CD8-positive, alpha-beta T cell (primary cell): ENCODE measurements at regions of chr11 and their contacts with region 1.

Region 1: GRCh38 chr11:75280227-75280701 is 39.7 kb downstream of the TPBGL start:
- DNase-seq: peak; percentile 60 to 89 (median 79)
- ATAC-seq: peak; percentile 67
- H3K4me3 ChIP-seq: no peak overlapping the region
- H3K4me3 Mint-ChIP-seq: no peak overlapping the region
- H3K27ac ChIP-seq: no peak overlapping the region
- H3K27ac Mint-ChIP-seq: peak overlapping the region; percentile 90
- H3K4me1 ChIP-seq: peaks cover 48% of the 10 kb centered on the region
- H3K4me1 Mint-ChIP-seq: peaks cover 46% of the 10 kb centered on the region
- H3K27me3 ChIP-seq: no peaks in the 10 kb centered on the region
- H3K27me3 Mint-ChIP-seq: no peaks in the 10 kb centered on the region
- CTCF ChIP-seq: peak; percentile 96

Region 2: GRCh38 chr11:75208446-75208845 is 71.8 kb before region 1 on chr11:
- CTCF ChIA-PET with region 1: no interaction called
- POLR2A ChIA-PET with region 1: no interaction called
- intact Hi-C with region 1: no loop called
- DNase-seq: no peak
- ATAC-seq: no peak
- H3K4me3 ChIP-seq: no peak overlapping the region
- H3K4me3 Mint-ChIP-seq: no peak overlapping the region
- H3K27ac ChIP-seq: no peak overlapping the region
- H3K27ac Mint-ChIP-seq: no peak overlapping the region
- H3K4me1 ChIP-seq: no peaks in the 10 kb centered on the region
- H3K4me1 Mint-ChIP-seq: no peaks in the 10 kb centered on the region
- H3K27me3 ChIP-seq: peaks cover 0 to 2% of the 10 kb centered on the region in 2 experiments
- H3K27me3 Mint-ChIP-seq: peaks cover 12% of the 10 kb centered on the region
- CTCF ChIP-seq: no peak

Region 3: DNA sequence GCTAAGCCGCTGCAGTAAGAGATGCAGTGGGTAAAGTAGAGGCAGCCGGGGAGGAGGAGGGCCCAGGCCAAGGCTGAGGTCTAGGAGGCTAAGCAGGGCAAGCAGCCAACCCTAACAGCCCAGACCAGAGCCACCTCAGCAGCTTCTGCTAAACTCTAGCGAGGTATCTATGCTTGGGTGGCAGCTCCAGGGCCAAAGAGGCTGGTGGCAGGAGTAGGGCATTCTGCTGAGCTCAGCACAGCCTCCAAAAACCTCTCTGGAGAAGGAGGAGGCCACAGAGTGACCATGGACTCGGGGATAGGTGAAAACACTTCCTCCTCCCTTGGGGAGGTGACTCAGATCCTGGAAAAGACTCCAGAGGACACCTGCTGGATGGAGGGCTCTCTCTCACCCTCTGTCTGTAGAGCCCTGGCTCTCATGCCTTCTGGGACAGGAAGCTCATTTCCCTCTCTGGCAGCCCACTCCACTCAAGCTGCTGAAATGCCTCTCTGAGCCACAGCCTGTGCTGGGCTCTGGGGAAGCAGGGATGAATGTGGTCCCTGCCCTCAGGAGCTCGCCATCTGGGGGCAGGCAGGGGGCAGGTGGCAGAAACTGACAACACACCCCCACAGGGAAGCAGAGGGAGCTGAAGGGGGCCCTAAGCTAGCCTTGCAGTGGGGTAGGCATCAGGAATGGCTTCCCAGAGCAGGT is 56.2 kb before region 1 on chr11:
- CTCF ChIA-PET with region 1: no interaction called
- POLR2A ChIA-PET with region 1: no interaction called
- intact Hi-C with region 1: no loop called
- DNase-seq: no peak
- ATAC-seq: no peak
- H3K4me3 ChIP-seq: no peak overlapping the region
- H3K4me3 Mint-ChIP-seq: no peak overlapping the region
- H3K27ac ChIP-seq: no peak overlapping the region
- H3K27ac Mint-ChIP-seq: no peak overlapping the region
- H3K4me1 ChIP-seq: no peaks in the 10 kb centered on the region
- H3K4me1 Mint-ChIP-seq: no peaks in the 10 kb centered on the region
- H3K27me3 ChIP-seq: no peaks in the 10 kb centered on the region
- H3K27me3 Mint-ChIP-seq: peaks cover 3% of the 10 kb centered on the region
- CTCF ChIP-seq: no peak

Region 4: GRCh38 chr11:75248690-75249268 is 31.5 kb before region 1 on chr11:
- CTCF ChIA-PET with region 1: interaction called, 191 read pairs
- POLR2A ChIA-PET with region 1: no interaction called
- intact Hi-C with region 1: no loop called
- DNase-seq: peak; percentile 77 to 91 (median 87)
- ATAC-seq: peak; percentile 100
- H3K4me3 ChIP-seq: no peak overlapping the region
- H3K4me3 Mint-ChIP-seq: no peak overlapping the region
- H3K27ac ChIP-seq: no peak overlapping the region
- H3K27ac Mint-ChIP-seq: no peak overlapping the region
- H3K4me1 ChIP-seq: no peaks in the 10 kb centered on the region
- H3K4me1 Mint-ChIP-seq: no peaks in the 10 kb centered on the region
- H3K27me3 ChIP-seq: no peaks in the 10 kb centered on the region
- H3K27me3 Mint-ChIP-seq: peaks cover 2% of the 10 kb centered on the region
- CTCF ChIP-seq: peak; percentile 100

Region 5: DNA sequence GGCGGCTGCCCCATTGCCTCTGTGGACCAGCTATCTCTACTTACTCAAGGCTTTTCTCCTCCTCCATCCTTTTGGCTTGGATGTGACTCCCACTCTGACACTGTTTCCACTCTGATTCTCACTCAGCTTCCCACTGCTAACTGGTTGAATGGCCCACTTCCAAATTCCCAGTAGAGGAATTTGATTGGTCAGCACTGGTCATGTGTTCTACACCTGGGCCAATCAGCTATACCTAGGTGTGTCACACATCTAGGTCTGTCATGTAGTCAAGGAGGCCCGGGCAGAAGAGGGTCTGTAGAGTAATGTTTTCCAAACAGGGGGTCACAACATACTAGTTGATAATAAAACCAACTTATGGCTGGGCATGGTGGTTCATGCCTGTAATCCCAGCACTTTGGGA is 13.6 kb after region 1 on chr11:
- CTCF ChIA-PET with region 1: interaction called, 23 read pairs
- POLR2A ChIA-PET with region 1: interaction called, 3 read pairs
- intact Hi-C with region 1: no loop called
- DNase-seq: no peak
- ATAC-seq: no peak
- H3K4me3 ChIP-seq: no peak overlapping the region
- H3K4me3 Mint-ChIP-seq: no peak overlapping the region
- H3K27ac ChIP-seq: no peak overlapping the region
- H3K27ac Mint-ChIP-seq: no peak overlapping the region
- H3K4me1 ChIP-seq: peaks cover 13% of the 10 kb centered on the region
- H3K4me1 Mint-ChIP-seq: peaks cover 27% of the 10 kb centered on the region
- H3K27me3 ChIP-seq: no peaks in the 10 kb centered on the region
- H3K27me3 Mint-ChIP-seq: no peaks in the 10 kb centered on the region
- CTCF ChIP-seq: no peak

Region 6: DNA sequence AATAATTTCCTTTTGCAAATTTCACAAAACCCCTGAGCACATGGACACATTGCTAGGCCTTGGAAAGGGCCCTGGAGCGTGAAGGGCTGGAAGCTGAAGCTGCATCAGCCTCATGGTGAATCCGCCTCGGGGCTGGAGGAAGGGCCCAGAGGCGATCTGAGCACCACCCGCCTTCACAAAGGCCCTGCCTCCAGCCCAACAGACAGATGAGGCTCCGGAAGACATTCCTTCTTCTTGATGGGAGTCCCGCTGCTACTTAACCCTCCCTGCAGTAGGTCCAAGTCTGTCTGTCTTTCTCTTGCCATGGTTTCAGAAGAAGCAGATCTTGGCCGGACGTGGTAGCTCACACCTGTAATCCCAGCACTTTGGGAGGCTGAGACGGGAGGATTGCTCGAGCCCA is 54.7 kb after region 1 on chr11:
- CTCF ChIA-PET with region 1: interaction called, 20 read pairs
- POLR2A ChIA-PET with region 1: interaction called, 6 read pairs
- intact Hi-C with region 1: no loop called
- DNase-seq: no peak
- ATAC-seq: no peak
- H3K4me3 ChIP-seq: no peak overlapping the region
- H3K4me3 Mint-ChIP-seq: no peak overlapping the region
- H3K27ac ChIP-seq: no peak overlapping the region
- H3K27ac Mint-ChIP-seq: no peak overlapping the region
- H3K4me1 ChIP-seq: peaks cover 76% of the 10 kb centered on the region
- H3K4me1 Mint-ChIP-seq: peaks cover 86% of the 10 kb centered on the region
- H3K27me3 ChIP-seq: no peaks in the 10 kb centered on the region
- H3K27me3 Mint-ChIP-seq: no peaks in the 10 kb centered on the region
- CTCF ChIP-seq: no peak

Region 7: GRCh38 chr11:75351791-75352587 is 71.7 kb after region 1 on chr11:
- CTCF ChIA-PET with region 1: interaction called, 23 read pairs
- POLR2A ChIA-PET with region 1: interaction called, 18 read pairs
- intact Hi-C with region 1: loop called in 1 of 2 experiments (anchors 5 kb)
- DNase-seq: peak; percentile 30 to 83 (median 59)
- ATAC-seq: peak; percentile 67
- H3K4me3 ChIP-seq: peak overlapping the region; percentile 68 to 95
- H3K4me3 Mint-ChIP-seq: peak overlapping the region; percentile 93
- H3K27ac ChIP-seq: peak overlapping the region; percentile 63 to 74
- H3K27ac Mint-ChIP-seq: peak overlapping the region; percentile 89
- H3K4me1 ChIP-seq: peaks cover 60% of the 10 kb centered on the region
- H3K4me1 Mint-ChIP-seq: peaks cover 64% of the 10 kb centered on the region
- H3K27me3 ChIP-seq: no peaks in the 10 kb centered on the region
- H3K27me3 Mint-ChIP-seq: no peaks in the 10 kb centered on the region
- CTCF ChIP-seq: no peak

Region 8: DNA sequence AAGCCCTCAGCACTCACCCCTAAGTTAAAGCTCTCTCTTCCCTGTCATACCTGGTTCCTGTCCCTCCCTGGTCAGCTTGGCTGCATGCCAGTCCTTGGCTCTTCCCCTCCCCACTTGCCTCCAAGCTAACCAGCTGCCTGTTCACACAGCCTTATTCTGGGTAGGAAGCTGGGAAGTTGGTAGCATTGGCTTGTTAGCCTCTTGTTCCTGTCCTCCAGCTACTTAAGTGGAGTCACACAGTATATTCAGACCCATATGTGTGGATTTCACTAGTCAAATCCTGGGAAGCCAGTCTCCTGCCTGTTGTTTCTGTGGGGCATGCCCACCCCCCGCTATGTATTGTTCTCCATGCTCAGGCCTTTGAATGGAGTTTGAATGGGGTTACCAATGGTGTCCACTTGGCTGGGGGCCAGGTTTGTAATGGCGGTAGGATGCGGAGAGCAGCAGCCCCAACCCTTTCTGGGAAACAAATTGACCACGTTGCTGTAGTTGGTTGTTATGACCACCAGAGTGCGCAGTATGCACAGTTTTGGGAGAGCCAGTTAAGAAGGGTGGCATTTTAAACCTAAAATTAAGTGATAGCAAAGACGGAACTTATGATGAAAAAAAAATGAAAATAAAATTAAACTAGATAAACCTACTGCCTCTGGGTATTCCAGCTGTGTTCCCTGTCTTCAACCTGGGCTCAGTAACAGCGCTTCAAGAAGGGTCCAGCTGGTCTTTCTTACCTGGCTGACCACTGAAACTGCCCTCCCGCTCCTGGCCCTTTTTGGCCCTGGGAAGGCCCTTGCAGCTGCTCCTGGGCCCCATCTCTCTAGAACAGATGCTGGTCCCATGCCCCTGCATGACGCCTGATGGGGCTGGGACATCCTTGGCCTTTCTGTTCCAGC is 108.4 kb after region 1 on chr11:
- CTCF ChIA-PET with region 1: interaction called, 650 read pairs
- POLR2A ChIA-PET with region 1: interaction called, 27 read pairs
- intact Hi-C with region 1: loop called (anchors 1 kb)
- DNase-seq: peak; percentile 39 to 87 (median 64)
- ATAC-seq: peak; percentile 93
- H3K4me3 ChIP-seq: no peak overlapping the region
- H3K4me3 Mint-ChIP-seq: no peak overlapping the region
- H3K27ac ChIP-seq: no peak overlapping the region
- H3K27ac Mint-ChIP-seq: no peak overlapping the region
- H3K4me1 ChIP-seq: peaks cover 15% of the 10 kb centered on the region
- H3K4me1 Mint-ChIP-seq: peaks cover 11% of the 10 kb centered on the region
- H3K27me3 ChIP-seq: no peaks in the 10 kb centered on the region
- H3K27me3 Mint-ChIP-seq: no peaks in the 10 kb centered on the region
- CTCF ChIP-seq: peak; percentile 81

Region 9: DNA sequence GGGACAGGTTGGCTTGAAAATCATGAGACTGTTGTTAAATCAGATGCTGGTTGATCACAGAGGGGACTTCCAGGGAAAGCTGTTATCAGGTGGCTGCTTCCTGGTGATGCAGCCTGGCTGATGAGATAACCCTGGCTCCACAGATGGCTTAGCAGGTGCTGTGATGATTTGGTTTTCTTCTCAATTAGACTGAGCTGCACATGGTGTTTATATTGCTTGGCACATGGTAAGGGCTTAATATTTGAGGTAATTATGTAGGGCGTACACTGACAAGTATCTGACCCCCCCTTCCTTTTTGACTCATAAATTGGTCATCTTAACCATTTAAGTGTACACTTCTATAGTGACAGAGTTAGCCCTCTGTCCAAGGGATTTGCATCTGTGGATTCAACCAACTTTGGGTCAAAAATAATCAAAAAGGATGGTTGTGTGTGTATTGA is 126.1 kb after region 1 on chr11:
- CTCF ChIA-PET with region 1: interaction called, 24 read pairs
- POLR2A ChIA-PET with region 1: interaction called, 16 read pairs
- intact Hi-C with region 1: no loop called
- DNase-seq: no peak
- ATAC-seq: no peak
- H3K4me3 ChIP-seq: no peak overlapping the region
- H3K4me3 Mint-ChIP-seq: no peak overlapping the region
- H3K27ac ChIP-seq: no peak overlapping the region
- H3K27ac Mint-ChIP-seq: no peak overlapping the region
- H3K4me1 ChIP-seq: peaks cover 19% of the 10 kb centered on the region
- H3K4me1 Mint-ChIP-seq: peaks cover 52% of the 10 kb centered on the region
- H3K27me3 ChIP-seq: no peaks in the 10 kb centered on the region
- H3K27me3 Mint-ChIP-seq: no peaks in the 10 kb centered on the region
- CTCF ChIP-seq: no peak